GM10248 (cell line): ENCODE measurements at regions of chr18 and their contacts with region 1.

Region 1: DNA sequence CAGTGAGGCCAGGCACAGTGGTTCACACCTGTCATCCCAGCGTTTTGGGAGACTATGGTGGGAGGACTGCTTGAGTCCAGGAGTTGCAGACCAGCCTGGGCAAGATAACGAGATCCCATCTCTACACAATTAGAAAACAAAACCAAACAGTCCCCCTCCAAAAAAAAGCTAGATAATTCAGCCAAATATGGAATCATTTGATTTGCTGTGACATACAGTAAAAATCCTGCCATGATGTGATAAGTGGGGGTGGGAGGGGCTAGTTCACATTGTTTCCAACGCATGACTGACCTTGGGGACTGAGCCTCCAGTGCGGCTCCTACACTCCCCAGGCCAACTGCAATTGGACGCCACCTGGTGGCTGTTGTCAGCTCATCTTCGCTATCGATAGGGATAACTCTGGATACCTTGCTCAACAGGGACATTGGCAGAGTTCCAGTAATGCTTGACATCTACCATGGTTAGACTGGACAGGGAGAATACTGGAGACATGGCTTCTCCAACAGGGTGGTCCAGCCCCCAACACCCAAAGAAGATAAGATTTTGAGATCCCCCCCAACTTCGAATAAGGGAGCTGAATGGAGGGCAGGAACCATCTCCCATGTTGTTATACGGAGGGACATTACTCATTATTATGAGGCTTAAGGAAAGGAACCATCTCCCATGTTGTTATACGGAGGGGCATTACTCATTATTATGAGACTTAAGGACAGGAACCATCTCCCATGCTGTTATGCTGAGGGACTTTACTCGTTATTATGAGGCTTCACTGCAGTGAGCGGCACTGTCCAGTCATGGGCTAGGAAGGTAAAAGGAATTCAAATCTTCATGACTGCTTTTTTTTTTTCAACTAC is 135.9 kb downstream of the TGIF1 start:
- DNase-seq: peak; percentile 61
- CTCF ChIP-seq: peak; percentile 81

Region 2: GRCh38 chr18:3281456-3282400 is 304.2 kb before region 1 on chr18:
- CTCF ChIA-PET with region 1: interaction called, 13 read pairs
- POLR2A ChIA-PET with region 1: no interaction called
- DNase-seq: peak; percentile 59
- CTCF ChIP-seq: peak; percentile 61

Region 3: GRCh38 chr18:3297025-3297984 is 288.6 kb before region 1 on chr18:
- CTCF ChIA-PET with region 1: interaction called, 16 read pairs
- POLR2A ChIA-PET with region 1: no interaction called
- DNase-seq: peak; percentile 81
- CTCF ChIP-seq: peak; percentile 88

Region 4: DNA sequence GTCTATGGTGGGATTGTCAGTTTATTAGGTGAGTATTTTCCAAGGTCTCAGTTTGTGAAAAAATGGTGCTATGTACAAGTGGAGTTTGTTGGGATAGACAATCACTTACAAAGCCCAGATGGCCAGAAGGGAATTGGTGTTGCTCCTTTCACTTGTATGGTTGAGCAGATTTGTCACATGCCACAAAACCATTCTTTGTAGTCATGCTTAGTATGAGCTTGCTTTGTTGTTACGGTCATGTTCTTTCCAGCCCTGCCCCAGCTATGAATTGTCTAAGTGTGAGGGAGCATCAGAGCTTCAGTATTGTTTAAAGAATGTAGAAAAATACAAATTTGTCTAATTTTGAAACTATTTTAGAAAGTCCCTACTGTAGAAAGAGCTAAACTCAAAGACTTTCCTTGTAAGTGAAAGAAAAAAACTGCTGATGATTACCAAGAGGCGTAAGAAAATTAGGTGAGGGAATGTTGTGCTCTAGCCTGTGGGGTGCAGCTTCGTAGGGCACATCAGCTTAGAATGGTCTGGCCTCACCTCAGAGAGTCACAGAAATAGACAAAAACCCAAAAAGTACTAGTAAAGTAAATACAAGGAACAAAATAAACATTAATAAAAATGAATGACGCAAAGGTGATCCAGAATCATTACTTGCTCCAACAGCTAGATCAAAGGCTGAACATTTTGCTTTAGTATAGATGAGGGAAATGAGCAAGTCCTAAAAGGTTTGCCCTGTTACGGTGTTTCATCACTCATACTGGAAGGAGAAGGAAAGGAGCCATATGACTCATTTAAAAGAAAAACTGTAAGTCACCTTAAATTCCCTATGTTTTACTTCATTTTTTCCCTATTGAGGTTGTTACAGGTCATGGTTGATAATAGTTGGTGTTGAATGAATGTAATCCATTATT is 126.7 kb before region 1 on chr18:
- CTCF ChIA-PET with region 1: interaction called, 12 read pairs
- POLR2A ChIA-PET with region 1: no interaction called
- DNase-seq: no peak
- CTCF ChIP-seq: no peak

Region 5: DNA sequence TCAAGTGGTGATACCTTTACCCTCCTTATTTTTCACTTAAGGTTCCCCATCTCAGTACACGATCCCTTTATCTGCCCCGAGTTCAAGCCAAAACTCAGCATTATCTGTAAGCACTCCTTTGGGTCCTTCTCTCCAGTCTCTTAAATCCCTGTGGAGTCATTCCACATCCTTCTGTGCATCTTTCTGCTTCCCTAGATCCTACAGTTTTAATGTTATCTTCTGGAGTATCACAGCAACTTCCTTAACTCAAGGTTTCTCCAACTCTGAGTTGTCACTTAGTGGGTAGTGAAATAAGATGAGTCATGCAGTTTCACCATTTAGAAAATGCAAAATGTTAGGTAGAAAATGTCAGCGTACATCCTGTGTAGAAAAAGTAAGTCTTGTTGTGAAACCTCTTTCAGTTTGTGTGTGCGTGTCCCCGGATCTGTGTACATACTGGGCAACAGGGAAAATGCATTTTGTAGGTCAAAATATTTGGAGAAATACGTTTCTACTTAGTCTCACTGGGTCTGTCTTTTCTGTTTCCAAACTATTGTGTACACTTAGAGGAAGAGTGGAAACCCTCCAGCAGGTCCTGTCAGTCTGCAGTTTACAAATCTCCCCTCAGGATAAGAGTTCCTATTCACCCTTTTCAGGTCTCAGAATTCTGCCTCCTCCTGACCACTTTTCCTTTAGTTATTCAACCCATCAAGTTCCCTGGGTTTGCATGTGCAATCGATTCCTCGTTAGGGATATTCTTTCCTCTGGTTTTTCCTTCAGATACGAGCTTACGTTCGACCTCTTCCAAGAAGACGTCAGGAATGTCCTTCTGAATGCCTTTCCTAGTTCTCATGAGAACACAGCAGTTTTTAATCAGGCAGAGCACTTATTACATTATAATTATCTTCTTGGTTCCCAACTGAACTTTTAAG is 18.9 kb after region 1 on chr18:
- CTCF ChIA-PET with region 1: interaction called, 10 read pairs
- POLR2A ChIA-PET with region 1: no interaction called
- DNase-seq: peak; percentile 47
- CTCF ChIP-seq: no peak